MCF 10A (cell line): ENCODE measurements at regions of chrX and their contacts with region 1.

Region 1: GRCh38 chrX:3962511-3963311 is 249.3 kb upstream of the PRKX start:
- DNase-seq: peak; percentile 46
- H3K4me3 Mint-ChIP-seq: peak overlapping the region; percentile 1
- H3K27ac Mint-ChIP-seq: no peak overlapping the region
- H3K4me1 Mint-ChIP-seq: peaks cover 8% of the 10 kb centered on the region
- H3K27me3 Mint-ChIP-seq: peaks cover 34% of the 10 kb centered on the region
- CTCF ChIP-seq: peak; percentile 74

Region 2: GRCh38 chrX:3940000-3940610 is 22.6 kb before region 1 on chrX:
- CTCF ChIA-PET with region 1: interaction called, 40 read pairs
- POLR2A ChIA-PET with region 1: no interaction called
- intact Hi-C with region 1: no loop called
- DNase-seq: peak; percentile 38
- H3K4me3 Mint-ChIP-seq: no peak overlapping the region
- H3K27ac Mint-ChIP-seq: no peak overlapping the region
- H3K4me1 Mint-ChIP-seq: no peaks in the 10 kb centered on the region
- H3K27me3 Mint-ChIP-seq: no peaks in the 10 kb centered on the region
- CTCF ChIP-seq: peak; percentile 49

Region 3: GRCh38 chrX:3950373-3950772 is 12.3 kb before region 1 on chrX:
- CTCF ChIA-PET with region 1: interaction called, 30 read pairs
- POLR2A ChIA-PET with region 1: no interaction called
- intact Hi-C with region 1: no loop called
- DNase-seq: no peak
- H3K4me3 Mint-ChIP-seq: no peak overlapping the region
- H3K27ac Mint-ChIP-seq: no peak overlapping the region
- H3K4me1 Mint-ChIP-seq: no peaks in the 10 kb centered on the region
- H3K27me3 Mint-ChIP-seq: no peaks in the 10 kb centered on the region
- CTCF ChIP-seq: no peak

Region 4: DNA sequence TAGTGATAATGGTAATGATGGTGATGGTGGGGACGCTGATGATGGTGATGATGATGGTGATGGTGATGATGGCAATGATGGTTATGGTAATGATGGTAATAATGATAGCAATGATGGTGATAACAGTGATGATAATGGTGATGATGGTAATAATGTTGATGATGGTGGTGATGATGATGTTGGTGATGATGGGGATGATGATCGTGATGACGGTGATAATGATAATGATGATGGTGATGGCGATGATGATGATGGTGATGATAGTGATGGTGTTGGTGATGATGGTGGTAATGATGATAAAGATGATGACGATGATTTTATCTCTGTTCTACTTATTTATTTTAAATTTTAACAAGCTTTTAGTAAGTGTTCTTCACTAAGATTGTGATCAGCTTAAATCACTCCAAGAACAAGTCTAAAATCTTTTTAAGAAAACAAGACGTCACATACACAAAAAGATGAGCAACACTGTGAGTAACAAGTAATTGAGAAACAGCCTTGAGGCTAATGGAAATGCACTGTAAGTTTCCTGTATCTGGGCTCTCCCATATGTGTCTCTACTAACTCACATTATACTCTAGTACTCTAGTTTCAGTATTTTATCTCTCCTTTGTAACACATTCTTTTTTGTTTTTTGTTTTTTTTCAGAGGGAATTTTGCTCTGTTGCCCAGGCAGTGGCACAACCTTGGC is 230.9 kb after region 1 on chrX:
- CTCF ChIA-PET with region 1: no interaction called
- POLR2A ChIA-PET with region 1: no interaction called
- intact Hi-C with region 1: no loop called
- DNase-seq: no peak
- H3K4me3 Mint-ChIP-seq: no peak overlapping the region
- H3K27ac Mint-ChIP-seq: no peak overlapping the region
- H3K4me1 Mint-ChIP-seq: no peaks in the 10 kb centered on the region
- H3K27me3 Mint-ChIP-seq: peaks cover 9% of the 10 kb centered on the region
- CTCF ChIP-seq: no peak

Region 5: GRCh38 chrX:4547213-4547836 is 584.6 kb after region 1 on chrX:
- CTCF ChIA-PET with region 1: interaction called, 4 read pairs
- POLR2A ChIA-PET with region 1: no interaction called
- intact Hi-C with region 1: loop called (anchors 2 kb)
- DNase-seq: peak; percentile 48
- H3K4me3 Mint-ChIP-seq: no peak overlapping the region
- H3K27ac Mint-ChIP-seq: no peak overlapping the region
- H3K4me1 Mint-ChIP-seq: no peaks in the 10 kb centered on the region
- H3K27me3 Mint-ChIP-seq: no peaks in the 10 kb centered on the region
- CTCF ChIP-seq: peak; percentile 91

Region 6: DNA sequence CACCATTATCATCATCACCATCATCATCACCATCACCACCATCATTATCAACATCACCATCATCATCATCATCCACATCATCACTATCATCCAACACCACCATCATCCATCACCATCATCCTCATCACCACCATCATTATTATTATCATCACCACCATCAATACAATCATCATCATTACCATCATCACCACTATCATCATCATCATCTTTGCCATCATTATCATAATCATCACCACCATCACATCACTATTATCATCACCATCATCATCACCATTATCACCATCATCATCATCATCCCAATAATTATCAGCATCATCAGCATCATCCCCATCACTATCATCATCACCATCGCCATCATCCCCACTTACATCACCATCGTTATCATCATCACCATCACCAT is 772.5 kb after region 1 on chrX:
- CTCF ChIA-PET with region 1: no interaction called
- POLR2A ChIA-PET with region 1: no interaction called
- intact Hi-C with region 1: no loop called
- DNase-seq: no peak
- H3K4me3 Mint-ChIP-seq: no peak overlapping the region
- H3K27ac Mint-ChIP-seq: no peak overlapping the region
- H3K4me1 Mint-ChIP-seq: no peaks in the 10 kb centered on the region
- H3K27me3 Mint-ChIP-seq: no peaks in the 10 kb centered on the region
- CTCF ChIP-seq: no peak

Region 7: GRCh38 chrX:5876984-5877596 is 1914.4 kb after region 1 on chrX:
- CTCF ChIA-PET with region 1: interaction called, 6 read pairs
- POLR2A ChIA-PET with region 1: no interaction called
- intact Hi-C with region 1: loop called (anchors 5 kb)
- DNase-seq: no peak
- H3K4me3 Mint-ChIP-seq: no peak overlapping the region
- H3K27ac Mint-ChIP-seq: no peak overlapping the region
- H3K4me1 Mint-ChIP-seq: no peaks in the 10 kb centered on the region
- H3K27me3 Mint-ChIP-seq: no peaks in the 10 kb centered on the region
- CTCF ChIP-seq: peak; percentile 57